ENCODE measurements at regions of chr2 and their contacts with region 1.

Region 1: GRCh38 chr2:179454443-179455171 is 190.0 kb upstream of the SESTD1 start:
- DNase-seq: peak; percentile 93
- H3K4me3 ChIP-seq: no peak overlapping the region
- CTCF ChIP-seq: no peak

Region 2: GRCh38 chr2:179440642-179441251 is 13.9 kb before region 1 on chr2:
- CTCF ChIA-PET with region 1: interaction called, 20 read pairs
- POLR2A ChIA-PET with region 1: no interaction called
- DNase-seq: no peak
- H3K4me3 ChIP-seq: no peak overlapping the region
- CTCF ChIP-seq: peak; percentile 45